ENCODE measurements at regions of chr19 and their contacts with region 1.

Region 1: GRCh38 chr19:44689056-44689895 is 9.7 kb upstream of the CEACAM16 start:
- DNase-seq: peak; percentile 82 to 92 (median 88)
- H3K4me3 ChIP-seq: peak overlapping the region in 1 of 7 experiments; percentile 24
- H3K27ac ChIP-seq: no peak overlapping the region
- H3K4me1 ChIP-seq: peaks cover 7 to 46% (median 40%) of the 10 kb centered on the region in 4 experiments
- H3K27me3 ChIP-seq: peaks cover 0 to 6% (median 0%) of the 10 kb centered on the region in 5 experiments

Region 2: DNA sequence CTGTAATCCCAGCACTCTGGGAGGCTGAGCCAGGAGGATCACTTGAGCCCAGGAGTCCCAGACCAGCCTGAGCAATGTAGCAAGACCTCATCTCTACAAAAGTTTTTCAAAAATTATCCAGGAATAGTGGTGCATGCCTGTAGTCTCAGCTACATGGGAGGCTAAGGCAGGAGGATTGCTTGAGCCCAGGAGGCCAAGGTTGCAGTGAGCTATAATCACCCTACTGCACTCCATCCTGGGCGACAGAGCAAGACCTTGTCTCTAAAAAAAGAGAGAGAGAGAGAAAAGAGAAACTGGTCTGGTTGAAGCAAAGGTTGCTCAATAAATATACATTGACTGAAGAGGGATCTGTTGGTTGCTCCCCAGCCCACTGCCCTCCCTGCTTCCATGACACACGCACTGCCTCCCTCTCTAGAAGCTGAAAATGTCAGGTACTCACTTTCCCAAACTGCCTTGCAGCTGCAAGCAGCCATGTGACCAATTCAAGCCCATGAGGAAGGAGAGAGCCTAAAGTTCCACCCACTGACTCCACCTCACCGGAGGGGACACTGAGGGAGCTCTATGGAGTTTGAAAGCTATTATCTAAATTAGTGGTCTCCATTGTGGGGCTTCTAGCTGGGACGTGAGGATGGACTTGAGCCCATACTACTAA is 23.7 kb after region 1 on chr19:
- CTCF ChIA-PET with region 1: interaction called, 15 read pairs
- POLR2A ChIA-PET with region 1: no interaction called
- DNase-seq: peak in 2 of 3 donors; percentile 42 to 57
- H3K4me3 ChIP-seq: no peak overlapping the region
- H3K27ac ChIP-seq: no peak overlapping the region
- H3K4me1 ChIP-seq: peaks cover 0 to 15% (median 12%) of the 10 kb centered on the region in 4 experiments
- H3K27me3 ChIP-seq: no peaks in the 10 kb centered on the region